B cell (primary cell): ENCODE measurements at regions of chr5 and their contacts with region 1.

Region 1: DNA sequence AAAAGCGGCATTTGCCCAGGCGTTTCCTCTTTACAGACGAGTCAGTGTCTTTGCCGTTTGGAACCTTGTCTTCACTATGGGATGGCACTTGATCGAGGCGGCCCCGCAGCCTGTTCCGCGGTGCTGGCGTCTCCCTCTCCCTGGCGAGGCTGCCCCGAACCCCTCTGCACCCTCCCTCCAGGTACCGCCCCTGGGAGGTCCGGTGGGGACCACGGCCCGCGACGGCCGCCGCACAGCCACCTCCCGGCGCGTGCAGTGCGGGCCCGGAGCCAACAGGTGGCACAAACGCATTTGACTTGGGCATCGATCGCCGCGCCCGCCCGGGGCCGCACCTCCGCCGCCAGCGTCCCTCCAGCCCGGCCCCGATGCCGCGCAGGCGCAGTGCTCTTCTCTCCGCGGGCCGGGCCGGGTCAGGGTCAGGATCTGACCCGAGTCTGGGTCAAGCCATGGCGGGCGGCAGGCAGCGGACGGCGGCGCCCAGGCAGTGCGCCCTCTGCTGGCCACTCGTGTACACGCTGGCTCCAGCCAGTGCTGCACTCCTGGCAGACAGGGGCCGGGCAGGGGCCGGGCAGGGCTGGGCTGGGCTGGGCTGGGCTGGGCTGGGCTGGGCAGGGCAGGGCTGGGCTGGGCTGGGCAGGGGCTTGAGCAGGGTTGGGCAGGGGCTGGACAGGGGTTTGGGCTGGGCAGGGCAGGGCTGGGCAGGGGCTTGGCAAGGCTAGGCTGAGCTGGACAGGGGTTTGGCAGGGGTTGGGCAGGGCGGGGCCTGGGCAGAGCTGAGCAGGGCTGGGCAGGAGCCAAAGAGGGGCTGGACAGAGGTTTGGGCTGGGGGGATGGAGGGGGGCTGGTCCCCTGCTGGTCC is 155.8 kb upstream of the IRX4 start:
- DNase-seq: peak; percentile 75
- ATAC-seq: peak; percentile 86
- H3K4me3 ChIP-seq: peak overlapping the region in 3 of 5 experiments; percentile 43 to 60 (median 56)
- H3K4me3 Mint-ChIP-seq: peak overlapping the region; percentile 76
- H3K27ac ChIP-seq: no peak overlapping the region
- H3K27ac Mint-ChIP-seq: no peak overlapping the region
- H3K4me1 ChIP-seq: peaks cover 0 to 4% of the 10 kb centered on the region in 2 donors
- H3K4me1 Mint-ChIP-seq: peaks cover 2% of the 10 kb centered on the region
- H3K27me3 ChIP-seq: peaks cover 0 to 10% (median 0%) of the 10 kb centered on the region in 4 experiments
- H3K27me3 Mint-ChIP-seq: peaks cover 28% of the 10 kb centered on the region
- CTCF ChIP-seq: peak; percentile 87

Region 2: DNA sequence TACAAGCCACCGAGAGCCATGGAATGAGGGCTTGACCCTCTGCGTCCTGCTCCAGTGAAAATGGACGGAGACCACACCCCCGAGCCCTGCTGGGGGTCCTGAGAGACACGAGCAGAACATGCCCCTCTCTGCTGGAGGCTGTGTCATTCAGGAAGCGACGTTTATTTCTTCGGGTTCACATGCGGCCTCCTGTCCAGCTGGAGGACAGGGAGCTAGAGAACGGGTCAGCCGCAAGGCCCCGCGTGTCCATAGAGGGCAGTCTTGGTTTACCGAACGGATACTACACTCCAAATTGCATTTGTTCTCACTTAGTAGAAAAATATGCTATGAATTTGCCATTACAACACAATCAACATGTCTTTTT is 275.0 kb before region 1 on chr5:
- CTCF ChIA-PET with region 1: interaction called, 3 read pairs
- POLR2A ChIA-PET with region 1: no interaction called
- intact Hi-C with region 1: loop called (anchors 10 kb)
- DNase-seq: no peak
- ATAC-seq: no peak
- H3K4me3 ChIP-seq: no peak overlapping the region
- H3K4me3 Mint-ChIP-seq: no peak overlapping the region
- H3K27ac ChIP-seq: no peak overlapping the region
- H3K27ac Mint-ChIP-seq: no peak overlapping the region
- H3K4me1 ChIP-seq: peaks cover 3 to 6% of the 10 kb centered on the region in 2 donors
- H3K4me1 Mint-ChIP-seq: no peaks in the 10 kb centered on the region
- H3K27me3 ChIP-seq: peaks cover 0 to 20% (median 5%) of the 10 kb centered on the region in 4 experiments
- H3K27me3 Mint-ChIP-seq: peaks cover 24% of the 10 kb centered on the region
- CTCF ChIP-seq: peak; percentile 25

Region 3: GRCh38 chr5:2024986-2025721 is 13.4 kb before region 1 on chr5:
- CTCF ChIA-PET with region 1: no interaction called
- POLR2A ChIA-PET with region 1: no interaction called
- intact Hi-C with region 1: no loop called
- DNase-seq: no peak
- ATAC-seq: no peak
- H3K4me3 ChIP-seq: no peak overlapping the region
- H3K4me3 Mint-ChIP-seq: no peak overlapping the region
- H3K27ac ChIP-seq: no peak overlapping the region
- H3K27ac Mint-ChIP-seq: no peak overlapping the region
- H3K4me1 ChIP-seq: no peaks in the 10 kb centered on the region
- H3K4me1 Mint-ChIP-seq: no peaks in the 10 kb centered on the region
- H3K27me3 ChIP-seq: no peaks in the 10 kb centered on the region
- H3K27me3 Mint-ChIP-seq: peaks cover 22% of the 10 kb centered on the region
- CTCF ChIP-seq: no peak

Region 4: DNA sequence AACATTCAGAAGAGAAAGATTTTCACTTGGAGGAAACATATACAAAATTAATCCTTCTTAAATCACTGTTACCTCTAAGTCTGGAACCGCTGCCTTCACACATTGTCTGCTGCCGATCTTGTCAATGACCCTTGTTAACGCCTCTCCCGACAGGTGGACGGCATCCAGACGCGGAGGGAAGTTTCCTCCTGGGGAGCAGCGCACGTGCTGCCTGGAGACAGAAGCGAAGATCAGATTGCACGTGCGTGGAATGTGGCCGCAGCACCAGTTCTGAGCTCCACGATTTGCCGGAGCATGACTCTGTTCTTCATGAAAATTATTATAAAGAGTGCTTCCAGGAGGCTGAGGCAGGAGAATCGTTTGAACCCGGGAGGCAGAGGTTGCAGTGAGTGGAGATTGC is 27.8 kb after region 1 on chr5:
- CTCF ChIA-PET with region 1: no interaction called
- POLR2A ChIA-PET with region 1: no interaction called
- intact Hi-C with region 1: no loop called
- DNase-seq: no peak
- ATAC-seq: no peak
- H3K4me3 ChIP-seq: no peak overlapping the region
- H3K4me3 Mint-ChIP-seq: no peak overlapping the region
- H3K27ac ChIP-seq: no peak overlapping the region
- H3K27ac Mint-ChIP-seq: no peak overlapping the region
- H3K4me1 ChIP-seq: no peaks in the 10 kb centered on the region
- H3K4me1 Mint-ChIP-seq: no peaks in the 10 kb centered on the region
- H3K27me3 ChIP-seq: no peaks in the 10 kb centered on the region
- H3K27me3 Mint-ChIP-seq: no peaks in the 10 kb centered on the region
- CTCF ChIP-seq: no peak